ENCODE measurements at regions of chr11 and their contacts with region 1.

Region 1: GRCh38 chr11:129109701-129110100 is 82.4 kb downstream of the ARHGAP32 start:
- DNase-seq: no peak
- H3K4me3 ChIP-seq: no peak overlapping the region
- H3K27ac ChIP-seq: no peak overlapping the region
- H3K4me1 ChIP-seq: peaks cover 0 to 5% (median 2%) of the 10 kb centered on the region in 4 donors
- H3K27me3 ChIP-seq: no peaks in the 10 kb centered on the region
- CTCF ChIP-seq: no peak
- EP300 ChIP-seq: no peak
- POLR2A ChIP-seq: no peak

Region 2: DNA sequence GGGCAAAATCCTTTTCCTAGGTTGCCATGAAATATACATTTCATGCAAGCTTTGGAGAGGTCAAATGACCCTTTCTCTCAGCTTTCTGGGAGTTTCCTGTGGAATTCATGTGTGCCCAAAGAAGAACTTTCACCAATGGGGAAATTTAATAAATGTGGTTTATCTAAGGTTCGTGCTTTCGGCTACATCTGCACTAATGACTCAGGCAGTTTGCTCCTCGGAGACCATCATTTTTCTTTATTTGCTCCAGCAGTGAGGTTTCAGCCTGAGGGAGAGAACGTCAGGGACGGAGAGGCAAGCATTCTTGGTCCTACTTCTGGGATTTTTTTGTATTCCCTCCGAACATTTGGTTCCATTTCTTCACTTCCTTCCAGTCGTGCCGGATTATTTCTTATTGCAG is 330.7 kb before region 1 on chr11:
- in situ Hi-C with region 1: no loop called
- intact Hi-C with region 1: no loop called
- DNase-seq: no peak
- H3K4me3 ChIP-seq: no peak overlapping the region
- H3K27ac ChIP-seq: no peak overlapping the region
- H3K4me1 ChIP-seq: peaks cover 0 to 4% (median 0%) of the 10 kb centered on the region in 4 donors
- H3K27me3 ChIP-seq: no peaks in the 10 kb centered on the region
- CTCF ChIP-seq: no peak
- EP300 ChIP-seq: no peak
- POLR2A ChIP-seq: no peak

Region 3: DNA sequence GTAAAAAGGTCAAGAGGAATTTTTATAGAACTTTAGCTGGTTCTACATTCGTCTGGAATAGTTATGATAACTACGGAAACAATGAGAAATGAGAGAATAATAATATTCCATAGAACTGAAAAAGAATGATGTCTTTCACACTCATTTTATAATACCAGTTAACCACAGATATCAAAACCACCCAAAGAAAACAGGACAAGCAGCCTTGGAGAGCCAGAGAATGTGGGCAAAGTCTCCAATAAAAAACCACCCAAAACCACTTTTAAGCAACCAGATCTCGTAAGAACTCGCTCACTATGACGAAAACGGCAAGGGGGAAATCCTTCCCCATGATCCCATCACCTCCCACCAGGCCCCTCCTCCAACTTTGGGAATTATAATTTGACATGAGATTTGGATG is 21.6 kb after region 1 on chr11:
- in situ Hi-C with region 1: no loop called
- intact Hi-C with region 1: no loop called
- DNase-seq: no peak
- H3K4me3 ChIP-seq: no peak overlapping the region
- H3K27ac ChIP-seq: no peak overlapping the region
- H3K4me1 ChIP-seq: no peaks in the 10 kb centered on the region
- H3K27me3 ChIP-seq: no peaks in the 10 kb centered on the region
- CTCF ChIP-seq: no peak
- EP300 ChIP-seq: no peak
- POLR2A ChIP-seq: no peak

Region 4: DNA sequence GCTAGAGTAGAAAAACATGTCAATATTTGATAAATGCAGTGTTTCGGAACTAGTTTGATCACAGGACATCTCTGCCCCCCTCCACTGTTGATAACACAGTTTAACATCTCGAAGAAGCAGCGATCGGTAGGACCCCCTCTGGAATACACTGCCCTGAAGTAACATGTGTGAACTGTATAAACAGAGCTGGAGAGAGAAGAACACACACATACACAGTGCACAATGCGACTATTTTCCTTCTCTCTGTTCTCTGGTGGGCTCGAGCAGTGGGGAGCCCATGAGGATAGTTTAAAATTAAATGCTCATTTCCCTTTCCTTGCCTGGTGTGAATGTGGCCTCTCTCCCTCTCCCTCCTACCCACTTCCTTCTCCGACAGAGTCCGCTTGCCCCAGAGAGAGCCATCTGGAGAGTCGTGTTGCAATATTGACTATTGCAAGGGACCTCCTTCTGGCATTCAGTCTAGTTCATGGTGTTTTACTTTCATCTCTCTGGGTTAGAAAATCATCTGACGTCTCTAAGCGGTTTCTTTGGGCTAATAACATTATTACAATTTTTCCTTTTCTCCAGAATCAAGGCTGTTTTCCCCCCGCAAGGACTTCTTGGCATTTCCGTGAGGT is 214.3 kb after region 1 on chr11:
- in situ Hi-C with region 1: loop called in 3 of 4 experiments (anchors 5 to 10 kb)
- intact Hi-C with region 1: no loop called
- DNase-seq: peak; percentile 27
- H3K4me3 ChIP-seq: peak overlapping the region in 1 of 4 donors; percentile 16
- H3K27ac ChIP-seq: peak overlapping the region; percentile 57 to 80 (median 78)
- H3K4me1 ChIP-seq: peaks cover 12 to 44% (median 28%) of the 10 kb centered on the region in 4 donors
- H3K27me3 ChIP-seq: no peaks in the 10 kb centered on the region
- CTCF ChIP-seq: no peak
- EP300 ChIP-seq: no peak
- POLR2A ChIP-seq: no peak

Region 5: DNA sequence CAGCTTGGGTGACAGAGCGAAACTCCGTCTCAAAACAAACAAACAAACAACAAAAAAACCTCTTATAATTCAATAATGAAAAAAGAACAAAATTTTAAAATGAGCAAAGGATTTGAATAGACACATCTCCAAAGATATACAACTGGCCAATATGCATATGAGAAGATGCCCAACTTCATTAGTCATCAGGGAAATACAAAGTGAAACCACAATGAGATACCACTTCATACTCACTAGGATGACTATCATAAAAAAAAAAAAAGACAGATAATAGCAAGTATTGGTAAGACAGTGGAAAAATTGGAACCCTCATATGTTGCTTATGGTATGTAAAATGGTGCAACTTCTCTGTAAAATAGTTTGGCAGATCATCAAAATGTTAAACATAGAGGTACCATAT is 237.2 kb after region 1 on chr11:
- in situ Hi-C with region 1: loop called in 1 of 4 experiments (anchors 5 kb)
- intact Hi-C with region 1: no loop called
- DNase-seq: no peak
- H3K4me3 ChIP-seq: no peak overlapping the region
- H3K27ac ChIP-seq: no peak overlapping the region
- H3K4me1 ChIP-seq: no peaks in the 10 kb centered on the region
- H3K27me3 ChIP-seq: peaks cover 4% of the 10 kb centered on the region
- CTCF ChIP-seq: no peak
- EP300 ChIP-seq: no peak
- POLR2A ChIP-seq: no peak

Measured in transverse colon (tissue), 4 donors.